ENCODE measurements at regions of chr15 and their contacts with region 1.

Region 1: GRCh38 chr15:40232625-40233070 is 6.2 kb upstream of the PAK6 start:
- DNase-seq: peak in 1 of 6 donors; percentile 15
- ATAC-seq: no peak
- H3K4me3 ChIP-seq: no peak overlapping the region
- H3K27ac ChIP-seq: no peak overlapping the region
- H3K4me1 ChIP-seq: no peaks in the 10 kb centered on the region
- H3K27me3 ChIP-seq: no peaks in the 10 kb centered on the region
- CTCF ChIP-seq: no peak

Region 2: GRCh38 chr15:39819533-39819932 is 413.1 kb before region 1 on chr15:
- intact Hi-C with region 1: no loop called
- DNase-seq: no peak
- ATAC-seq: no peak
- H3K4me3 ChIP-seq: no peak overlapping the region
- H3K27ac ChIP-seq: no peak overlapping the region
- H3K4me1 ChIP-seq: no peaks in the 10 kb centered on the region
- H3K27me3 ChIP-seq: no peaks in the 10 kb centered on the region
- CTCF ChIP-seq: no peak

Region 3: GRCh38 chr15:40266828-40267304 is 34.2 kb after region 1 on chr15:
- intact Hi-C with region 1: loop called in 1 of 3 experiments (anchors 5 kb)
- DNase-seq: no peak
- ATAC-seq: peak in 3 of 4 donors; percentile 36 to 79 (median 70)
- H3K4me3 ChIP-seq: no peak overlapping the region
- H3K27ac ChIP-seq: no peak overlapping the region
- H3K4me1 ChIP-seq: no peaks in the 10 kb centered on the region
- H3K27me3 ChIP-seq: no peaks in the 10 kb centered on the region
- CTCF ChIP-seq: no peak

Measured in pancreas (tissue), 10 donors.